Vagina (tissue), 2 donors: ENCODE measurements at regions of chr14 and their contacts with region 1.

Region 1: DNA sequence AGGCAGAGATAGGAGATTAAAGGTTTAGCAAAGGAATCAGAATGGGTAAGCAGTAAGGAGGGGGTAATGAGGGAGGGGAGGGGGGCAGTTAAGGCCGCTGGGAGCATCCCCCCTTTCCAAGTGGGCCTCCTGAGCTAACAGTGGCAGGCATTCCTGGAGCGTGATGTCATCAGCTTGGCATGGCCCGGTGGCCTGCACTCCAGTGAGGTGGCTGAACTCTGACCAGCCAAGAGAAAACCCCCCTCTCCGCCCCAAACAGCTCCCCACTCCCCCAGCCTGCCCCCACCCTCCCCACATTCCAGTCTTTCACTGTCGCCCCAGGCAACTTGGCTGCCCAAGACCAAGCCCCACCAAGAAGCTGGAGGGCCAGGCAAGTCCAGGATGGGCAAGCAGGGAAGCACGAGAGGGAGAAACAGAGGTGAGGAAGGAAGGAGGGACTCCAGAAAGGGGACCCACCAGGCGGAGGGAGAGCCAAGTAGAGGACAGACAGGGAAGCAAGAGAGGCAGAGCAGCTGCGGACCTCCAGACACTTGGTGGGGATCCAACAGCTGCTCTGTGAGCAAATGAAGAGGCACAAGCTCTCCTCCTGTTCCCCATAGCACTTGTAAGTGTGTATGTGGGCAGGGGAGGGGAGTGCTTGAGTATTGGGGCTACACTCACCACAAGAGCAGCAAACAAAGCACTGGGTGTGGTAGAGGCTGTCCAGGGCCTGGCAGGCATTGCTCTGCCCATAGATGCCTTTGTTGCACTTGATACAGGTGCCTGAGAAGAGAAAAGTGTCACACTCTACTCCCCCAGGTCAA is 4.5 kb downstream of the AJUBA start:
- DNase-seq: no peak
- H3K4me3 ChIP-seq: peak overlapping the region in 1 of 2 donors; percentile 5
- H3K27ac ChIP-seq: peak overlapping the region; percentile 89
- H3K4me1 ChIP-seq: peaks cover 52% of the 10 kb centered on the region
- H3K27me3 ChIP-seq: no peaks in the 10 kb centered on the region
- CTCF ChIP-seq: no peak
- POLR2A ChIP-seq: no peak

Region 2: GRCh38 chr14:24895243-24895583 is 1917.3 kb after region 1 on chr14:
- intact Hi-C with region 1: loop called (anchors 5 kb)
- DNase-seq: no peak
- H3K4me3 ChIP-seq: no peak overlapping the region
- H3K27ac ChIP-seq: no peak overlapping the region
- H3K4me1 ChIP-seq: no peaks in the 10 kb centered on the region
- H3K27me3 ChIP-seq: no peaks in the 10 kb centered on the region
- CTCF ChIP-seq: no peak
- POLR2A ChIP-seq: no peak